ENCODE measurements at regions of chr5 and their contacts with region 1.

Region 1: GRCh38 chr5:71782771-71783770 is 64.0 kb downstream of the CARTPT start:
- DNase-seq: peak; percentile 84
- ATAC-seq: peak; percentile 95

Region 2: GRCh38 chr5:71864730-71865601 is 81.9 kb after region 1 on chr5:
- intact Hi-C with region 1: loop called (anchors 10 kb)
- DNase-seq: no peak
- ATAC-seq: peak; percentile 71

Region 3: DNA sequence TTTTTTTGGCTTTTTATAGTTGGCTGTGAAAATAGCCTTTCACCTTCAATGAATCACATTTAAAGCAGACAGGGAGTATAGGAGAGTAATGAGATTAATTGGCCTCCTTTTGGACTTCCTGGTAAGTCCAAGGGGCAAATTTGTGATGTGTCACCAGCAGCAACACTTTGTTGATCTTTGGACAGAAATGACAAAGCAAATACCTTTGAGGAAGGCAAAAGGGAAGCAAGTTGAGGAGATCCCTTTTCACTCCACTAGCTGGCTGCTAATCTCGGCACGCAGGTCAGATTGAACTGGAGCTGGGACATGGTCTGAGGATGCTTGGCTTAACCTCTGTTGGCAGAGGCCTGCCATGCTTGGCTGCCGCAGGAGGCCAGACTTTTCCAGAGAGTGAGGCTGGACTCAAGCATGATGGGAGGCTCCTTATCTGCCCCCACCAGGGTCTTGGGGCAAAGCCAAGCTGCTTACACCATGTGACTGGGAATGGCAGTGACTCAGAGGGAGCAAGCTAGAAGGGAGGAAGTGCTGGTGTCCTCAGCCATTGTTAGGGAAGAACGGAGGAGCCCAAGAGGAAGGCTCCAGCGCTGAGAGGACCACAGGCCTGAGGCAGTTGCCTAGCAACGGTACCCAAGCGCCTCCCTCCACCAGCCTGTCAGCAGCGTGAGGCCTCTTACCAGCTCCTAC is 149.7 kb after region 1 on chr5:
- intact Hi-C with region 1: loop called (anchors 10 kb)
- DNase-seq: peak; percentile 62
- ATAC-seq: peak; percentile 83

Region 4: DNA sequence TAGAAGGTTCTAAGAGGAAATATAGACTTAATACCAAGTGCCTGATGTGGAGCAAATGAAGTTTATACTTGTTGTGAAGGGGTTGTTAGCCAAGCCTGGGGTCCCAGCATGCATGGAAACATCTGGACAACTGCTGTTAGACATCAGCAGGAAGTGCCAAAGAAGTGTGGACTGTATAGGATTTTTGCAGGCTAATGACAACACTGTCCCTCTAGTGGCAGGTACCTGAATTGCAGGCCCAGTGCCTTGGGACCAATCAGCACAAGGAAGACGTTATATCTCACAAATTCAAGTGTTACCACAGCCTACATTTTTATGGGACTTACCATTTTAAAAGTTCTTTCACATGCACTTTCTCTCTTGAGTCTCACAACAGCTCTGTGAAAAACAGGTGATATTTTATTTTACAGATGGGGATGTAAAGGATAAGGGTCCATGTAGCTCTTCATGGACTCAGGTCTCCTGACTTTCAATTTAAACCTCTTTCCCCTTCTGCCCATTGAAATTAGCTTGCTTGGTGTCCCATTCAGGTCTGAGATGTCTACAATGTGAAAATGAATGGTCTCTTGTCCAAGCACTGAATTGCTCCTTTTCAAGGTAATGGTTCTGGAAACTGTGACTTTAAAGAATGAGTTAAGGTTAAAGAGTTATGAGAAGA is 235.2 kb after region 1 on chr5:
- intact Hi-C with region 1: loop called (anchors 10 kb)
- DNase-seq: no peak
- ATAC-seq: peak; percentile 56

Region 5: GRCh38 chr5:72108202-72109061 is 325.4 kb after region 1 on chr5:
- intact Hi-C with region 1: loop called (anchors 5 kb)
- DNase-seq: peak; percentile 86
- ATAC-seq: peak; percentile 83

Region 6: DNA sequence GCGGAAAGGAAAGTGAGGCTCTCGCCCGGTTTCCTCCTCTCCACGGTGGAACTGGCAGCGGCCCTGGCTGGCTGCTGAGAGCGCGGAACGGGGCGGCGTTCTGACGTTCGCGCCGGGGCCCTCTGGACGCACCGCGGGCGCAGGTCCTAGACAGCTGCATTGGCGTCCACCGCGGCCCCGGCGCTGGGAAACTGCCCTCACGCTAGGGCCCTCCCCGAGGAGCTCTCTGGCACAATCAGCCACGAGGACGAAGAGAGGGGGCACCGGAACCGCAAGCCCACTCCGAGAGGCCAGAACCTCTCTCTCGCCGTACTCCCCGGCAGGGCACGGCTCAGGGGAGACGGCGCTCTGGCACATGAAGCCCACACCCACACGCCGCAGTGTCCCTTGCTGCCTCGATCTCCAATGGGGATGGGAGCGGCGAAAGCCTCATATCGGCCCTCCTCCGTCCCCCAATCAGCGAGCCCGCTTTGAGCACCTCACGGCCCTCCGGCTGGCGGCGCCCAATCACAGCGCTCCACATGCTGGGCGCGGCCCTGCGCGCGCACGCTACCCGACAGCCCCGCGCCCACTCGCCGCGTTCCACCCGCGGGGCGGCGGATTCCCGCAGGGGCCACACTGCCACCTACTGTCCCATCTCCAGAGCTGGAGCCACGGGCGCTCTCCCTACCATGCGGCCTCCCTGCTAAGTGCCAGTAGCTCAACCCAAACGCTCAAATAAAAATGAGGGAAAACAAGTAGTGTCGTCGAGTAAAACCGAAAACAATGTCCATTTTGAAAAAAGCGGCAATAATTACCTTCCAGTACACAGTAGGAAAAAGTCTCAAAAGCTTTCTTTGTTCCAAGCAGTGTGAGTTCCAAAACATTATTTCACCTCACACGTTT is 525.1 kb after region 1 on chr5:
- intact Hi-C with region 1: loop called (anchors 5 kb)
- DNase-seq: peak; percentile 98
- ATAC-seq: peak; percentile 99

Measured in Right ventricle myocardium superior (tissue), 1 donor.